ENCODE measurements at regions of chr5 and their contacts with region 1.

Region 1: GRCh38 chr5:59351076-59351794 is 542.3 kb downstream of the PDE4D start:
- DNase-seq: no peak
- ATAC-seq: peak; percentile 91

Region 2: DNA sequence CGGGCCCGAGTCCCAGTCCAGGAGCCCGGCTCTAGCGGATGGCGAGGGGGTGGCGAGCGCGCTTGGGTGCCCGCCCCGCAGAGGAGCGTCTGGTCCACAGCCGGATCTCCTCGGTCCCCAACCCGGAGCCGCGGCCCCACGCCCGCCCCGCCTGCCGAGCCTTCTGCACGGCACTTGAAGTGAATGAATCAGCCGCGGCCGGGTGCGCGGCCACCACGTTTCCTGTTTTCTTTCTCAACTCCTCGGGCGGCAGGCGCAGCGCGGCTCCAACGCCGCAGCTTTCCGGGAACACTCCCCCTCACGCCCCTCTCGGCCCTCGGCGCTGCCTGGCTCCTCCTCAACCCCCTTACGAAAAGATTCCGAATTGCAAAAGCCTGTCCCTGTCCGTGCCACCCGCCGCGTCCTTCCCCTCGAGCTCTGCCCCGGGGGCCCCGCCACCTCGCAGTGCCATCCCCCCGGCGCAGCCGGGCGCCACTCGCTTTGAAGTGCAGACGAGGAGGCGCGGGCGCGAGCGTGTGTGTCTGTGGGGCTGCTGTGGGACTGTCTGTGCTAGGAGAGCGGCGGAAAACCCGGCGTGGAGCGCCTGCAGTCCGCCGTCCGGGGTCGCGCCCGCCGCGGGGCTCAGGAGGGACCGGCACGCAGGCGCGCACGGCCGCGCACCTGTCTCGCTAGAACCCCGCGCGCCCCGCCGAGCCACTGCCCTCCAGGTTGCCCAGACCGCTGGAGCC is 311.8 kb before region 1 on chr5:
- intact Hi-C with region 1: loop called (anchors 10 kb)
- DNase-seq: peak; percentile 96
- ATAC-seq: peak; percentile 73

Region 3: GRCh38 chr5:59126708-59127573 is 224.3 kb before region 1 on chr5:
- intact Hi-C with region 1: loop called (anchors 5 kb)
- DNase-seq: no peak
- ATAC-seq: no peak

Region 4: GRCh38 chr5:59275510-59276324 is 75.5 kb before region 1 on chr5:
- intact Hi-C with region 1: loop called (anchors 10 kb)
- DNase-seq: no peak
- ATAC-seq: peak; percentile 89

Measured in Right ventricle myocardium inferior (tissue), 1 donor.